ENCODE measurements at regions of chr1 and their contacts with region 1.

Region 1: DNA sequence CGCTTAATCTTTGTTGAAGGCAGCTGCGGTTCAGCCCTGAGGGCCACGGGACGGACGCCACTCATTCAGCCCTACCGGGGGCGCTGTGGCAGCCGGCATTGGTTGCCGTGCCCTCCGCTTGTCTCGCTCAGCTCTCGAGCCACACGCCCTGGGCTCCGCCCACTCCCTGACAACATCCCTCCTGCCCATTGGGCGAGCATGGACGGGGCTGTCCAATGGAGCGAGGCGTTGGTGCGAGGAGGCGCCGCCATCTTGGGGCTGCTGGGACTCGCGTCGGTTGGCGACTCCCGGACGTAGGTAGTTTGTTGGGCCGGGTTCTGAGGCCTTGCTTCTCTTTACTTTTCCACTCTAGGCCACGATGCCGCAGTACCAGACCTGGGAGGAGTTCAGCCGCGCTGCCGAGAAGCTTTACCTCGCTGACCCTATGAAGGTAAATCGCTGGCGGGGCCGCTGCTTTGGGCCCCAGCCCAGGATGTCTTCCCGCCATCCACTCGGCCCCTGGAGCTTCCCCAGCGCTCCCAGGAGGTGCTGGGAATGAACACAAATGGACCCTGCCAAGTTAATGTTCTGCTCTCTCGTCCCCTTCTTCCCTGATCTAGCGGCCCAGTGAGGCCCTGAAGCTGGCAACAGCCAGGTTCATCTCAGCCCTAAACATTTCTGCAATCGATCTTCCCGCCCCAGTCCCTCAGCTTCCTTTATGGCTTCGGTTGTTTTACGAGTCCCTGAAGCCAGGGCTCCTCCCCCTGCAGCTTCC is at the start of gene SRP9:
- DNase-seq: peak; percentile 99
- ATAC-seq: peak; percentile 99
- H3K4me3 Mint-ChIP-seq: no peak within 1 kb of the TSS
- H3K27ac Mint-ChIP-seq: no peak within 1 kb of the TSS
- H3K4me1 Mint-ChIP-seq: peaks cover 27% of the 10 kb centered on the region
- H3K27me3 Mint-ChIP-seq: no peaks in the 10 kb centered on the region
- total RNA-seq, gene SRP9: 240 to 247 TPM

Region 2: DNA sequence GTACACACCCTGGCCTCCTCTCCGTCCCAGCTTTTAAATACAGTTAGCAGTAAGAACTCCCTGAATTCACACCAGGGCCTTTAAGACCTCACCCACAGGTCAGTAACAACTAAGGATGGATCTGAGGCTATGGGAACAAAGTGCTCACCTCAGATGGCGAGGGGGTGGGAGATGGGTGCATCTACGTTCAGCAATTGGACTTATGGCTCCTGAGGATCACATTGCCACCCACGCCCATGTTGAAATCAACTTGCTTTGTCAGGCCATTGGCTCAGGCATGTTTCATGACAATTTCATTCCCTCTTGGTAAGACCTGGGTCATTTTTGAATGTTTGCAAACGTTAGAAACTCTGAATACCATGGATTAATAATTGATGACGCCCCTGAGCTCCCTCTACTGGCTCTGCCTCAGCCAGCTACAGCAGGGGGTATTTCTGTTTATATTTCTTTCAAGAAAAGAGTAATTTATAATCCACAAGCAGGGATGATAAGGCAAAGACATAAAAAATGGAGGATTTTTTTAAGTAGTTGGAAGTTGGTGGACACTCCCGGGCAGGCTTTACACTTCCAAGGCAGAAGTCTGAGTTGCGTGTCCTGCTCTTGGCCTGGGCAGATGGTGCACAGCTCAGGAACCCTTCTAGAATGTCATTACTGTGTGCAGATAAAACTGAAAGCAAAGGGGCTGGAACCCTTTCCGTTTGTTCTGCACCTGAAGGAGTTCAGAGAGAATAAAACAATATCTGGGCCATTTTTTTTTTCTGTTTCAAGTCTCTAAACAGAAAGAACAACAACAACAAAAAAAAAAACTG is 336.2 kb before region 1 on chr1:
- CTCF ChIA-PET with region 1: no interaction called
- POLR2A ChIA-PET with region 1: interaction called, 10 read pairs
- DNase-seq: no peak
- ATAC-seq: no peak
- H3K4me3 Mint-ChIP-seq: peak overlapping the region; percentile 55
- H3K27ac Mint-ChIP-seq: peak overlapping the region; percentile 75
- H3K4me1 Mint-ChIP-seq: peaks cover 54% of the 10 kb centered on the region
- H3K27me3 Mint-ChIP-seq: no peaks in the 10 kb centered on the region

Region 3: DNA sequence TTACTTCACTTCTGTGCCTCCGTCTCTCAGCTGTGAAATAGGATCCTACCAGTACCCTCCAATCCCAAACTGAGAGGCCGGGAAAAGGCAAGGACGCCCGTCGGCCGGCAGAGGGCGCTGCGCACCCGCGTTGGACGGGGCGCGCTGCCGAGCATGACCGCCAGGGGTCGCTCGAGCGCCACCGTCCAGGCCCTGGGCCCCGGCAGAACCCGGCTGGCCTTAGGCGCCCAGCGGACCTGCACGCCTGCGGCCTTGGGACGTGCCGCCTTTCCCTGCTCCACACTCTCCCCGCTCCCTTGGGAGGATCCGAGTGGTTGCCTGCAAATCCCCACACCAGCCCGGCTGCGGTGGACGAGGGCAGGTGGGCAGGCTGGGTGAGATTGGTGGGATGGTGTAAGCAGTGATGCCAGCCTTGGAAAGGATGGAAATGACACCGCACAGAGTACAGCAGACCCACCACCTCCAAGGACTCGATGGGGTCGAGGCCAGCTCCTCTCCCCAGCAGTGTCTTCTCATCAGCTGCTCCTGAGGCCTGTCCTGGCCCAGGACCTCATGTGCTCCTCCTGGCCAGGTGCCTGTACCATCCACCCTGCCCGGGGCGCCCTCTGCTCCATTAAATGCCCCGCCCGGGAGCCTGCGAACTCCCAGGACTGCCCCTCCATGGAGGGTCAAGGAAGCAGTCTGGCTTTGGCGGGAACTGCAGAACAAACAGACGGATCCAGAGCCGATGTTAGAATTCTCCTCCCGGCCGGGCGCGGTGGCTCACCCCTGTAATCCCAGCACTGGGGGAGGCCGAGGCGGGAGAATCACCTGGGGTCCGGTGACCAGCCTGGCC is 302.6 kb before region 1 on chr1:
- CTCF ChIA-PET with region 1: interaction called, 43 read pairs
- POLR2A ChIA-PET with region 1: interaction called, 5 read pairs
- DNase-seq: peak; percentile 69
- ATAC-seq: peak; percentile 74
- H3K4me3 Mint-ChIP-seq: no peak overlapping the region
- H3K27ac Mint-ChIP-seq: no peak overlapping the region
- H3K4me1 Mint-ChIP-seq: peaks cover 51% of the 10 kb centered on the region
- H3K27me3 Mint-ChIP-seq: peaks cover 5% of the 10 kb centered on the region

Region 4: DNA sequence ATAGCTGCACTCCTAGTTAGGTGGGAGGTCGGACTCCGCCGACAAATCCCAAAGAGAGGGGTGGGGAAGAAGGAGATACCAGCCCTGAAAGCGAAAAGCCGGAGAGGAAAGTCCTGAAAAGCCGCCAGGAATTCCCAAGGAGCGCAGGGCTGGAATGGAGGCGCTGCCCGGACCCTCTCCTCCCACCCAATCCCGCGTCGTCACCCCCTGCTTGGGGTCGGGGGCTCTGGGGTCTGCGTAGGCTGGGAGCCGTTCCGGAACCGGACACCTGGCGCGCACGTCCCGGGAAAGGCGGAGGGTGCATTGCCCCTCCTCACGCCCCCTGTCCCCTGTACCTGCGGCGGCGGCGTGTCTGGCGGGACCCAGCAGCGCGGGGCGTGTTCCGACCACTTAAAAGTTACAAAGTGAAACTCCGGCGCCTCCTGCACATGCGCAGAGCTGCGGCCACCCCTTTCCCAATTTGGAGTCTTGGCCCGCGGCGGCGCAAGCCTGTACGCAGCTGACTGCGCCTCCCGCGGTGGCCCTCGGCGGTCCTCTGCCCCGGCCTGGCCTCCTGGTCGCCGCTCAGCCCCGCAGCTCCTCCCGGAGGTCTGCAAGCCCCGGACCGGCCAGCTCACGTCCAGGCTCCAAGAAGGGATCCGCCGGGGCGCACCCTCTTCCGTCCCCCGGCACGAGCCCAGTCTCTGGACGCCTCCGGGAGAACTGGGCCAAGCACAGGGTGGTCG is 104.4 kb after region 1 on chr1 and contains the start of gene TMEM63A:
- CTCF ChIA-PET with region 1: interaction called, 22 read pairs
- POLR2A ChIA-PET with region 1: interaction called, 50 read pairs
- DNase-seq: peak; percentile 93
- ATAC-seq: peak; percentile 83
- H3K4me3 Mint-ChIP-seq: peak within 1 kb of the TSS; percentile 87
- H3K27ac Mint-ChIP-seq: peak within 1 kb of the TSS; percentile 92
- H3K4me1 Mint-ChIP-seq: peaks cover 56% of the 10 kb centered on the region
- H3K27me3 Mint-ChIP-seq: peaks cover 8% of the 10 kb centered on the region
- total RNA-seq, gene TMEM63A: 83.5 to 85.8 TPM

Region 5: GRCh38 chr1:225911191-225912130 is 133.7 kb after region 1 on chr1:
- CTCF ChIA-PET with region 1: interaction called, 43 read pairs
- POLR2A ChIA-PET with region 1: interaction called, 7 read pairs
- DNase-seq: peak; percentile 74
- ATAC-seq: peak; percentile 89
- H3K4me3 Mint-ChIP-seq: no peak overlapping the region
- H3K27ac Mint-ChIP-seq: no peak overlapping the region
- H3K4me1 Mint-ChIP-seq: peaks cover 19% of the 10 kb centered on the region
- H3K27me3 Mint-ChIP-seq: no peaks in the 10 kb centered on the region

Region 6: DNA sequence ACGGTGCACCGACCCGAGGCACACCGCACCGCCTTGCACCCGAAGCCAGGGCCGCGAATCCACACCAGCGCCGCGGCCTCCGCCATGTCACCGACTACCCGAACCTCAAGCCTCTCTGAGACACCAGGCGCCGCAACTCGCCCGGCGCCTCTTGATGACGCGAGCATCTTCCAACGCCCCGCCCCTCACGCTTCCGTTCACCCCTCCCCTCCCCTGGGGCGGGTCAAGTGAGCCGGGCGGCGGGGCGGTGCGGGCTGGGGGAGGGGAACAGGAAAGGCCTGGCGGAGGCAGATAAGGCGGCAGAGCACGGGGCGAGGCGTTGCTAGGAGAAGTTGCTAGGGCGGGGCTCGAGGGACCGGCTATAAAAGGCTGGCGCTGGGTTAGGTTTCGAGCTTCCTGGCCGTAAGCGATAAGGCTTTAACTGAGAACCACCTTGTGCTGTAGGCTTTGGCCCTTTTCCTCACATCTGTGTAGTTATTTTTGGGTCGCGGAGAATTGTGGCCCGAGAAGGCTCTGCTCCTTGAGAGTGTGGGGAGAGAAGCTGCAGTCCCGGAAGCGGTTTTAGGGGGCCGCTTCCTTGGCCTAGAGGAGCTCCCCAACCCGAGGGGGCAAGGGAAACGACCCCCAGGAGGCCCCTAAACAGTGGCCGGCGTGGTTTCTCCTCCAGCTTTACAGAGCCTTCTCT is 221.6 kb after region 1 on chr1 and contains the start of gene SDE2:
- CTCF ChIA-PET with region 1: interaction called, 4 read pairs
- POLR2A ChIA-PET with region 1: interaction called, 24 read pairs
- DNase-seq: peak; percentile 100
- ATAC-seq: peak; percentile 77
- H3K4me3 Mint-ChIP-seq: peak within 1 kb of the TSS; percentile 100
- H3K27ac Mint-ChIP-seq: peak within 1 kb of the TSS; percentile 100
- H3K4me1 Mint-ChIP-seq: peaks cover 78% of the 10 kb centered on the region
- H3K27me3 Mint-ChIP-seq: no peaks in the 10 kb centered on the region
- total RNA-seq, gene SDE2: 15.4 to 16.9 TPM

Measured in activated CD8-positive, alpha-beta T cell treated with anti-CD3 and anti-CD28 coated beads, Interleukin-2, amount 10 ng/mL, durations not matched to agents 7 days and 5 days (primary cell).